A549 (cell line): ENCODE measurements at regions of chr14 and their contacts with region 1.

Region 1: GRCh38 chr14:67704484-67705089 is 2.9 kb downstream of the RDH12 start:
- DNase-seq: peak; percentile 73 to 74
- ATAC-seq: peak; percentile 93 to 99
- H3K4me3 ChIP-seq: no peak overlapping the region
- H3K27ac ChIP-seq: peak overlapping the region; percentile 19 to 53; a peak in 2 of 6 replicates
- H3K4me1 ChIP-seq: peaks cover 28% of the 10 kb centered on the region
- CTCF ChIP-seq: peak; percentile 94
- EP300 ChIP-seq: no peak
- POLR2A ChIP-seq: no peak
- RAD21 ChIP-seq: peak; percentile 91

Region 2: GRCh38 chr14:67526676-67527459 is 177.7 kb before region 1 on chr14:
- CTCF ChIA-PET with region 1: interaction called, 17 read pairs
- POLR2A ChIA-PET with region 1: no interaction called
- DNase-seq: peak; percentile 54 to 71
- ATAC-seq: peak; percentile 91 to 96
- H3K4me3 ChIP-seq: no peak overlapping the region
- H3K27ac ChIP-seq: no peak overlapping the region
- H3K4me1 ChIP-seq: no peaks in the 10 kb centered on the region
- CTCF ChIP-seq: peak; percentile 95
- EP300 ChIP-seq: no peak
- POLR2A ChIP-seq: no peak
- RAD21 ChIP-seq: peak; percentile 79 to 84

Region 3: DNA sequence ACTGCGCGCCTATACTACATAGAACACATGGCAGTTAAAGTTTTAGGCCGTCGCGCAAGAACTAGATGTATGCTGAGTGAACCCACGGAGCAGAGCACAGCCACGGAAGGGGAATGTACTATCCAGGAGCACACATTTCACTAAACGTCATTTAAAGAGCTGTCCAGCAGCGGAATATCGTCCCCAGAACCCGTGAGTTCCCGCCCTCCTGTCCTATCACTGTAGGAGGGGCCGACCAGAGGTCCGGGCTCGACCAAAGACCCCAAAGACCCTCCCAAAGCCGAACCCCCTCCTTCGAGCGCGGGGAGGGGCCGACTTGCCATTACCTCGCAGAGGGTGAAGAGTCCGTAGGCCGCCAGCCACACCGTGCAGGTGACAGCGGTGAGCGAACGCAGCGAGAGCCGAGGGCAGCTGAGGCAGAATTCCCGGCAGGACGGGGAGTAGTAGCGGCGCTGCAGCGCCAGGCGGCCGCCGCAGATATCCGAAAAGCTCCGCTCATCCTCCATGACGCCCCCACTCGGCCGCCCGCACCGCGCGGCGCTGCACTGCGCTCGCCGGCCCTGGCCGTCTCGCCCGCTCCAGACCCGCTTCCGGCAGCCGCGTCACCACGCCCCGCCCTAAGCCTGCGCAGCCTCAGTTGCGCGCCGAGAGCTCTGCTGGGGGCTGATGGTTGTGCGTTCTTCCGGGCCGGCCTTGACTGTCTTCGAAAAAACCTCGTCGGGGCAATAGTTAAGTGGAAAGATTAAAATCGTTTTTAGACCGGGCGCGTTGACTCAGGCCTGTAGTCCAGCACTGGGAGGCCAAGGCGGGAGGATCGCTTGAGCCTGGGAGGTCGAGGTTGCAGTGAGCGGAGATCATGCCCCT is 104.7 kb before region 1 on chr14 and contains the start of gene PIGH:
- CTCF ChIA-PET with region 1: interaction called, 13 read pairs
- POLR2A ChIA-PET with region 1: interaction called, 5 read pairs
- DNase-seq: peak; percentile 87 to 91
- ATAC-seq: peak; percentile 98 to 99
- H3K4me3 ChIP-seq: peak within 1 kb of the TSS; percentile 86
- H3K27ac ChIP-seq: peak within 1 kb of the TSS; percentile 86 to 89
- H3K4me1 ChIP-seq: peaks cover 11% of the 10 kb centered on the region; the same call in 2 of the 3 replicates
- CTCF ChIP-seq: peak; percentile 56
- EP300 ChIP-seq: no peak
- POLR2A ChIP-seq: peak; percentile 71
- RAD21 ChIP-seq: no peak; a peak in 1 of 5 replicates
- polyA plus RNA-seq, gene PIGH: 37.2 and 46.2 TPM in 2 replicates

Region 4: DNA sequence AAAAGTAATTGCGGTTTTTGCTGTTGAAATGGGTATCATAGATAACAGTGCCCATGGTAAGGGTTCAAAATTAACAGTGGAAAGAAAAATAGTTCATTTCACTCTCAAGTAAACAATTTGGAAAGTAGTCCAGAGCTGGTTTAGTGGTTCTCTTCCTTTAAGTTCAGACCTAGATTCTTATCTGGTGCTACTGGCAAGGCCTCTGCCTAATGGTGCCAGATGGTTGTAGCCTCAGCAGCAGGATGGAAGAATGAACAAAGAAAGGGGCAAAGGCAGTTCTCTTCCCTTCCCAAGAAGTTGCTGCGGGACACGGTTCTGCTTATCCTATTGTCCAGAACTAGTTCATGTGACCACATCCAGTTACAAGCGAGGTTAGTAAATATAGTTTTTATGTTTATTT is 74.4 kb before region 1 on chr14:
- CTCF ChIA-PET with region 1: interaction called, 11 read pairs
- POLR2A ChIA-PET with region 1: no interaction called
- DNase-seq: no peak
- ATAC-seq: no peak
- H3K4me3 ChIP-seq: no peak overlapping the region
- H3K27ac ChIP-seq: no peak overlapping the region
- H3K4me1 ChIP-seq: no peaks in the 10 kb centered on the region
- CTCF ChIP-seq: no peak
- EP300 ChIP-seq: no peak
- POLR2A ChIP-seq: no peak
- RAD21 ChIP-seq: no peak

Region 5: GRCh38 chr14:67674481-67675169 is 30.0 kb before region 1 on chr14 and contains the start of gene VTI1B:
- CTCF ChIA-PET with region 1: interaction called, 60 read pairs
- POLR2A ChIA-PET with region 1: interaction called, 17 read pairs
- DNase-seq: peak; percentile 74 to 81
- ATAC-seq: peak; percentile 96
- H3K4me3 ChIP-seq: peak within 1 kb of the TSS; percentile 97
- H3K27ac ChIP-seq: peak within 1 kb of the TSS; percentile 96 to 99
- H3K4me1 ChIP-seq: peaks cover 26% of the 10 kb centered on the region; the same call in 2 of the 3 replicates
- CTCF ChIP-seq: peak; percentile 24; the same call in 1 of the 3 replicates
- EP300 ChIP-seq: no peak
- POLR2A ChIP-seq: peak; percentile 58
- RAD21 ChIP-seq: no peak; a peak in 1 of 5 replicates
- polyA plus RNA-seq, gene VTI1B: 77.2 and 102 TPM in 2 replicates

Region 6: GRCh38 chr14:67690011-67690410 is 14.6 kb before region 1 on chr14:
- CTCF ChIA-PET with region 1: interaction called, 26 read pairs
- POLR2A ChIA-PET with region 1: interaction called, 22 read pairs
- DNase-seq: no peak
- ATAC-seq: no peak
- H3K4me3 ChIP-seq: no peak overlapping the region
- H3K27ac ChIP-seq: no peak overlapping the region
- H3K4me1 ChIP-seq: peaks cover 17% of the 10 kb centered on the region
- CTCF ChIP-seq: no peak
- EP300 ChIP-seq: no peak
- POLR2A ChIP-seq: no peak
- RAD21 ChIP-seq: no peak

Region 7: DNA sequence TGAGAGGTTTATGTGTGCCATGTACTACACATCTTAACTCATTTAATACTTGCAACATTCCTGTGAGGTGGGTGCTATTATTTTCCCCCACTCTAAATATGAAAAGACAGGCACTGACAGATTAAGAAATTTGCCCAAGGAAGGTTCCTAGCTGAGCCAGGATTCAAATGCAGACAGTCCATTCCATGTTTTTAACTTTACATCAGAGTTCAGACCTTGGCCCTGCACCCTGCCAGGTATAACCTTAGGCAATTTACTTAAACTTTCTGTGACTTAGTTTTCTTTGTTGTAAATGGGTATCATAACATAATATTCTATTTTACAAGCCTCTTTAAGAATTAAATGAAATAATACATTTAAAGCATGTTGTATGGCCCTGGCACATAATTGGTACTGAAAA is 23.7 kb after region 1 on chr14:
- CTCF ChIA-PET with region 1: interaction called, 44 read pairs
- POLR2A ChIA-PET with region 1: no interaction called
- DNase-seq: no peak
- ATAC-seq: no peak
- H3K4me3 ChIP-seq: no peak overlapping the region
- H3K27ac ChIP-seq: no peak overlapping the region
- H3K4me1 ChIP-seq: no peaks in the 10 kb centered on the region
- CTCF ChIP-seq: no peak
- EP300 ChIP-seq: no peak
- POLR2A ChIP-seq: no peak
- RAD21 ChIP-seq: no peak